CD8-positive, alpha-beta T cell (primary cell): ENCODE measurements at regions of chr1 and their contacts with region 1.

Region 1: DNA sequence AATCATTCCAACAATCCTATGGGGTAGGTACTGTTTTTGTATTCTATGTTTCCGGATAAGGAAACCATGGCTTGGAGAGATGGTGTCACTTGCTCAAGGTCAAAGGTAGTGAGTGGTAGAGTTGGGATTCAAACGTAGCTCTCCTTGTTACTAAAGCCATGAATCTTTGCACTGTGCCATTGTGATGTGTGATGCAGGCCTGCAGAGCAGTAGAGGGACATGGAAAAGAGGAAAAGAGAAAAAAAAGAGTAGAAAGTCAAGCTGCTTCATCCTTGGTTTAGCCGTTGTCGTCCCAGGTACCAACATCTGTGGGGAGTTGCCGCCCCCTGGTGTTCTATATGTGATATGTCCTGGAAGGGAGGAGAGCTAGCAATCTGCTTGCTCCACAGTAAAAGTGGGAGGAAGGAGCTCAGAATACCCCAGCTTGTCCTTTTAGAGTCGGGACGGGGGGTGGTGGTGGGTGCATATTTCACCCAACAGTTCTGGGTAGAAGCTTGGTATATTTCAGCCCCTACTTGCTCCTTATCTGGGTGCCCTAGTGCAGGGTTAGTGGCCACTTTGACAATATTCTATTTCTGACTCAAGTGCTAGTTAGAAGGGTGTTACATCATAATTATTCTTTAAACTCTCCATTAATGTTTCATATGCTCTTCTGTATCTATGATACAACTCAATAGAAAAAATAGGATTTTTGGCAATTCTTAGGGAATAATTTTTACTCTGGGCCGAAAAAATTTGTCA is 98.4 kb downstream of the EBNA1BP2 start:
- DNase-seq: peak; percentile 35 to 86 (median 74)
- ATAC-seq: peak; percentile 89
- H3K4me3 ChIP-seq: no peak overlapping the region
- H3K4me3 Mint-ChIP-seq: no peak overlapping the region
- H3K27ac ChIP-seq: no peak overlapping the region
- H3K27ac Mint-ChIP-seq: no peak overlapping the region
- H3K4me1 ChIP-seq: peaks cover 3% of the 10 kb centered on the region
- H3K4me1 Mint-ChIP-seq: peaks cover 8% of the 10 kb centered on the region
- H3K27me3 ChIP-seq: no peaks in the 10 kb centered on the region
- H3K27me3 Mint-ChIP-seq: no peaks in the 10 kb centered on the region
- CTCF ChIP-seq: peak; percentile 85

Region 2: GRCh38 chr1:42777852-42778251 is 295.8 kb before region 1 on chr1:
- CTCF ChIA-PET with region 1: interaction called, 53 read pairs
- POLR2A ChIA-PET with region 1: interaction called, 3 read pairs
- intact Hi-C with region 1: loop called in 1 of 2 experiments (anchors 1 kb)
- DNase-seq: peak in 5 of 9 experiments; percentile 21 to 52 (median 27)
- ATAC-seq: peak; percentile 68
- H3K4me3 ChIP-seq: no peak overlapping the region
- H3K4me3 Mint-ChIP-seq: no peak overlapping the region
- H3K27ac ChIP-seq: no peak overlapping the region
- H3K27ac Mint-ChIP-seq: no peak overlapping the region
- H3K4me1 ChIP-seq: no peaks in the 10 kb centered on the region
- H3K4me1 Mint-ChIP-seq: peaks cover 10% of the 10 kb centered on the region
- H3K27me3 ChIP-seq: no peaks in the 10 kb centered on the region
- H3K27me3 Mint-ChIP-seq: no peaks in the 10 kb centered on the region
- CTCF ChIP-seq: peak; percentile 57

Region 3: DNA sequence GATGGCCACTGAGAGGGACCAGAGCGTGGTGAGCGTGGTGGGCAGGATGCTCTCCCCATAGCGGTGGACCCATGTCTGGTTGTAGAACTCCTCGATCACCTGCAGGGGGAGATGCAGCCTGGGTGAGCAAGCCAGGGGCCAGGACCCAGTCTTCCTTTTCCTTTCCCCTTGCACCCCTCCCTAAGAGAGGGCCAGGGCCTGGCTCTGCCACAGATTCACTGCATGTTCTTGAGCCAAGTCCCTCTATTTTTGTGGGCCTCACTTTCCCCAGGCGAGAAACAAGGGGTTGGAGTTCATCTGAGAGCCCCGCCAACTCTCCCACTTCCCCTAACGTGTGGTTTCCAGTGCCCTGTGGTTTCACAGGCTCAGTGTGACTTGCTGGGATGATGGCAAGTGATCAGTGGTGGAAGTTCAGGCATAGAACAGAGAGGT is 142.5 kb before region 1 on chr1:
- CTCF ChIA-PET with region 1: interaction called, 784 read pairs
- POLR2A ChIA-PET with region 1: interaction called, 5 read pairs
- intact Hi-C with region 1: loop called (anchors 1 kb)
- DNase-seq: peak in 7 of 9 experiments; percentile 46 to 89 (median 67)
- ATAC-seq: peak; percentile 49
- H3K4me3 ChIP-seq: peak overlapping the region; percentile 22 to 43
- H3K4me3 Mint-ChIP-seq: peak overlapping the region; percentile 70
- H3K27ac ChIP-seq: peak overlapping the region; percentile 63 to 90
- H3K27ac Mint-ChIP-seq: peak overlapping the region; percentile 95
- H3K4me1 ChIP-seq: peaks cover 67% of the 10 kb centered on the region
- H3K4me1 Mint-ChIP-seq: peaks cover 67% of the 10 kb centered on the region
- H3K27me3 ChIP-seq: no peaks in the 10 kb centered on the region
- H3K27me3 Mint-ChIP-seq: no peaks in the 10 kb centered on the region
- CTCF ChIP-seq: peak; percentile 57

Region 4: GRCh38 chr1:42952303-42953001 is 121.2 kb before region 1 on chr1:
- CTCF ChIA-PET with region 1: interaction called, 16 read pairs
- POLR2A ChIA-PET with region 1: interaction called, 8 read pairs
- intact Hi-C with region 1: no loop called
- DNase-seq: peak in 7 of 9 experiments; percentile 39 to 76 (median 48)
- ATAC-seq: peak; percentile 59
- H3K4me3 ChIP-seq: peak overlapping the region; percentile 21 to 33
- H3K4me3 Mint-ChIP-seq: peak overlapping the region; percentile 50
- H3K27ac ChIP-seq: peak overlapping the region; percentile 30 to 73
- H3K27ac Mint-ChIP-seq: peak overlapping the region; percentile 76
- H3K4me1 ChIP-seq: peaks cover 93% of the 10 kb centered on the region
- H3K4me1 Mint-ChIP-seq: peaks cover 88% of the 10 kb centered on the region
- H3K27me3 ChIP-seq: no peaks in the 10 kb centered on the region
- H3K27me3 Mint-ChIP-seq: no peaks in the 10 kb centered on the region
- CTCF ChIP-seq: no peak

Region 5: GRCh38 chr1:43048601-43049011 is 25.1 kb before region 1 on chr1:
- CTCF ChIA-PET with region 1: interaction called, 20 read pairs
- POLR2A ChIA-PET with region 1: interaction called, 3 read pairs
- intact Hi-C with region 1: no loop called
- DNase-seq: no peak
- ATAC-seq: no peak
- H3K4me3 ChIP-seq: no peak overlapping the region
- H3K4me3 Mint-ChIP-seq: no peak overlapping the region
- H3K27ac ChIP-seq: no peak overlapping the region
- H3K27ac Mint-ChIP-seq: no peak overlapping the region
- H3K4me1 ChIP-seq: no peaks in the 10 kb centered on the region
- H3K4me1 Mint-ChIP-seq: no peaks in the 10 kb centered on the region
- H3K27me3 ChIP-seq: no peaks in the 10 kb centered on the region
- H3K27me3 Mint-ChIP-seq: peaks cover 2% of the 10 kb centered on the region
- CTCF ChIP-seq: no peak

Region 6: DNA sequence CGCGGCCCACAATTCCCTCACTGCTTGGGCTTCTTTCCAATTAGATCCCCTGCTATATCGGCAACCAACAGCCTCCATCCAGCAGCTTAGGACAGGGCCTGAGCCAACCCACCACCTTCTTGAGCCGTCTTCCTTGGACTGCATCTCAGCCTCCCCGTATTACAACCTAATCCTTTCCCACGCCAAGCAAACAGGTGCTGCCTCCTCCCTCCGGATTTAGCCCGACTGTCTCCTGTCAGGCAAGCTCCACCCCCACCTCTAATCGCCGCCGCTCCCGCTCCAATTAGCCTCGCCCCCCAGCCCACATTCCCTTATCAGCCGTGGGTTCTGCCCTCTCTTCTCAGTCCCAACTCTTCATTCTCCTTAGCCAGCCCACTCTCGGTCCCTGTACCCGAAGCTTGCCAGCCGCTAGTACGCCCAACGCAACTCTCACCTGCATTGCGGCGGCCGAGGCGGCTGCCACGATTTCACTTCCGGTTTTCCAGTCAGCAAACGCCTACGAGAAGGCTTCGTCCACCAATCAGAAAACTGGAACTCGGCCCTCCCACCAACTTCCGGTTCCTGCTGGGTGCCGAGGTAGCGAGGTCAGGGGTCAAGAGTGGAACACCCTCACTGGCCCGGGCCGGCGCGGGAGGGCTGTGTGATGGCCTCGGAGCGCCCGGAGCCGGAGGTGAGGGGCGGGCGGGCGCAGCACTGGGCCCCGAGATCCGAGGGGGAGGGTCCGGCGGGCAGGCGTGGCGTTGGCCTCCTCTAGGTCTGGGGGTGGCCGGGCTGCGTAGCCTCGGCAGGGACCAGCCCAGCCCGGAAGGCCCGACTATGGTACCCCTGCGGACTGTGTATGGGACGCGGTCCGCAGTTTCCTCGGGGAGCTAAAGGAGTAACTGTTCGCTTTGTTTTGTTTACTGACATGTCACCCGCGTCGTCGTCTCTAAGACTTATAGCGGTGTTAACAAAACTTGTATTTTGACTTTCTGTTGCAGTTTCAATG is 316.0 kb after region 1 on chr1 and contains the starts of genes MED8 and SZT2:
- CTCF ChIA-PET with region 1: no interaction called
- POLR2A ChIA-PET with region 1: no interaction called
- intact Hi-C with region 1: no loop called
- DNase-seq: peak; percentile 86 to 96 (median 92)
- ATAC-seq: peak; percentile 91
- H3K4me3 ChIP-seq: peak within 1 kb of the TSS; percentile 81 to 91
- H3K4me3 Mint-ChIP-seq: peak within 1 kb of the TSS; percentile 99
- H3K27ac ChIP-seq: peak within 1 kb of the TSS; percentile 70 to 86
- H3K27ac Mint-ChIP-seq: peak within 1 kb of the TSS; percentile 98
- H3K4me1 ChIP-seq: peaks cover 26% of the 10 kb centered on the region
- H3K4me1 Mint-ChIP-seq: peaks cover 57% of the 10 kb centered on the region
- H3K27me3 ChIP-seq: no peaks in the 10 kb centered on the region
- H3K27me3 Mint-ChIP-seq: no peaks in the 10 kb centered on the region
- CTCF ChIP-seq: no peak
- total RNA-seq, gene MED8: 18.8 to 20.2 TPM
- total RNA-seq, gene SZT2: 57.0 to 64.4 TPM